ENCODE measurements at regions of chr4 and their contacts with region 1.

Region 1: DNA sequence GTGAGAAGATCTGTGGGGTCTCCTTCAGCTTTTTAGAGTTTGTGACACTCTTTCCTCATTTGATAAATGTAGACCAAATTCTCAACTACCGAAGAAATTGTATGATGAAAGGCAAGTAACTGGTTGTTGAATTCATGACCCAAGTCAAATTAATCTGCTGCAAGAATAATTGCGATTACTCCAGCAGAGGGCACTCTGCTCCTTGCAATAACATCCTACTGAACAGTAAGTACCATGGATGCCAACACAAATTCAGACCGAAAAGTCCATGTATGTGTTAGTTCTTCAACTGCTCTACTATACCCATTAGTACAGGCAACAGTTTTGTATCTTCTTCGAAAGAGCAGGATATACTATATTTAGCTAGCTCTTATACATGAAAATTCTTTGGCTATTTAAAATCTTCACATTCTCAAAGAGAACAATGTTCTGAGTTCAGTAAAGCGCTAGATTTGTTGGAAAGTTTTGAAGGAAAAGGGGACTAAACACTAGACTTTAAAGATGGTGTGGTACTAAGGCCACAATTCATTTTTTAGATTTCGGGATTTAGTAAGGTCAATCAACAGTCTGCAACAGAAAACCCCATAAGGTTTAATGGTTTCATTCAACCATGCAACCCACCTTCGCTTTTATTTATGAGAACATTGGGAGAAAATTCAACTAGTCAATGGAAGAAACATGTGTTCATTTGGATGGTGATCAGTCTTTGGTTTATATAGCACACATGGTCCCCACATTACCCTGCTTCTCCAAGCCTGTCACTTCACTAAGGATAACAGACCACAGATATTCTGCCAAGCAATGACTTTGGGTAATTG is 105.4 kb upstream of the TBC1D9 start:
- DNase-seq: peak in 5 of 10 donors; percentile 39 to 75 (median 65)

Region 2: DNA sequence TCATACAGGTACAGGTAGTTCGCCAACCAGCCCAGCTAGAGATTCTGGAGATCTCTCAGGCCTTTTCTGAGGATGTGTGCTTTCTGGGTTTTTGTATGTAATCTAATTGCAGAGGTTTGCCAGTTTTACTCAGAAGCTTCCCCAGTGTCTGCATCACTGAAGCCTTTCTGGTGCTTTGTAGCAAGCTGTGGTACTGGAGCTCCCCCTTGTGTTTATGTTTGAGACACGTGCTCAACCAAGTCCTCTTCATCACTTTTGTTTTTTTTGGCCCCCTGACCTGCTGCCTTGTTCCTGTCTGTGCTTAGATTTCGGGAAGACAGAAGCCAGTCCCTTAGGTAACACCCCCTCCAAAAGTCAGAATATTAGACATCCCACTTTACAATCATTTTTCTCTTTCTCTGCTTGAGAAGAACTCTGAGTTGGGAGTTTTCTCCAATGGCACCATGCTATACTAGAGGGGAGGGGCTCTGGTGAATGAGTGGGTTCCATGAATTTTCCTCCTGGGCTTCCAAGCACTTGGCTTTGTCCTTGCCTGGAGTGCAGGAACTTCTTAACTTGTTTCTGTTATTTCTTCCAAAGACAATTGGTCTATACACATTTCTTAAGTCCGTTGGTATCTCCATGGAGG is 23.0 kb after region 1 on chr4:
- intact Hi-C with region 1: loop called (anchors 1 kb)
- DNase-seq: peak in 1 of 10 donors; percentile 19

Region 3: GRCh38 chr4:141133146-141133998 is 271.8 kb after region 1 on chr4 and contains the start of gene RNF150:
- intact Hi-C with region 1: loop called (anchors 1 kb)
- DNase-seq: peak; percentile 63 to 96 (median 82)

Measured in posterior cingulate gyrus (tissue), 11 donors.